OCI-LY7 (cell line): ENCODE measurements at regions of chrX and their contacts with region 1.

Region 1: DNA sequence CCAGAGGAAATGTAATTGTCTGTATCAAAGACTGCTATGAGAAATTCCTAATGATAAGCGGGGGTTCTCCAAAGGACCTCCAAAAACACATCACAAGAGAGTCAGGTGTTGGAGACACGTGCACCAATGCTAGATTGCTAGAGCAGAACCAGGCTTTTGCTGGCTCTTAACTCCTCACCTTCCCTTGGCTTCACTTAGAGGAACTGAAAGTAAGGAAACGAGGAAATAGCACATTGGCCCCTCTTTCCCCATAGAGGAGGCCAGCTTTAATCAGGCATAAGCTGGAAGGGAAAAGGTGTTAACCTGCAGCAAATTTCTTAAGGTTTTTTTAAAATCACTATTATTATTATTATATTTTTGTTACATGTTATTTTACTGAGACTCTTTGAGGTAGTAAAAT is 13.6 kb downstream of the OTC start:
- DNase-seq: peak; percentile 31
- H3K4me3 ChIP-seq: no peak overlapping the region
- H3K27ac ChIP-seq: no peak overlapping the region
- H3K4me1 ChIP-seq: peaks cover 18% of the 10 kb centered on the region
- CTCF ChIP-seq: no peak

Region 2: GRCh38 chrX:38262715-38263620 is 103.0 kb before region 1 on chrX:
- CTCF ChIA-PET with region 1: no interaction called
- POLR2A ChIA-PET with region 1: no interaction called
- intact Hi-C with region 1: no loop called
- DNase-seq: no peak
- H3K4me3 ChIP-seq: no peak overlapping the region
- H3K27ac ChIP-seq: no peak overlapping the region
- H3K4me1 ChIP-seq: no peaks in the 10 kb centered on the region
- CTCF ChIP-seq: no peak

Region 3: GRCh38 chrX:38304010-38304409 is 61.9 kb before region 1 on chrX:
- CTCF ChIA-PET with region 1: no interaction called
- POLR2A ChIA-PET with region 1: no interaction called
- intact Hi-C with region 1: loop called (anchors 10 kb)
- DNase-seq: peak; percentile 11
- H3K4me3 ChIP-seq: no peak overlapping the region
- H3K27ac ChIP-seq: no peak overlapping the region
- H3K4me1 ChIP-seq: no peaks in the 10 kb centered on the region
- CTCF ChIP-seq: peak; percentile 53